Activated CD4-positive, alpha-beta T cell treated with anti-CD3 and anti-CD28 coated beads, Interleukin-2, amount 10 ng/mL, durations not matched to agents 24 days and 14 days (primary cell): ENCODE measurements at regions of chr19 and their contacts with region 1.

Region 1: DNA sequence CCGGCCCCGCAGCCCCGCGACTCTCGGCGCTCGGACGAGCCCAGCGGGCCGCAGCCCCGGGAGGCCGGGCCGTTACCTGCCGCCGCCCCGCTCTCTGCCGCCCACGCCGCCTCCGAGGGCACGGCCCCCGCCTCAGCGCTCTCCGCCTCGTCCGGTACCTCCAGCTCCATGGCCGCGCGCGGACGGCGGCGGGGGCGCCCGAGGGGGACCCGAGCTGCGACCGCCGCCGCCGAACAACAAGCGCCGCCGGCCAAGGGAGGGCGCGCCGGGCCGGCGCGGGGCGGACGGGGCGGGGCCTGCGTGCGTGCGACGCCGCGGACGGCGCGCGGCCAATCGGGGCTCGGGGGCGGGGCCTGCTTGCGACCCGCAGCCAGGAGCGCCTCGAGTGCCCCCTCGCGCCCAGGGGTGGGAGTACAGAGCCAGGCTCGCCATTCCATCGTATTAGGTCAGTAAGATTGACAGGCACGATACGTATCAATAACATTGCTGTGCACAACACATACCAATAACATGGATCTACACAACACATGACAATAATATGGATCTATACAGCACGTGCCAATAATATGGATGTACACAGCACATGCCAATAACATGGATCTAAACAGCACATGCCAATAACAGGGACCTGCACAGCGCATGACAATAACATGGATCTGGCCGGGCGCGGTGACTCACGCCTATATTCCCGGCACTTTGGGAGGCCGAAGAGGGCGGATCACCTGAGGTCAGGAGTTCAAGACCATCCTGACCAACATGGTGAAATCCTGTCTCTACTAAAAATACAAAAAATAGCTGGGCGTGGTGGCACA is at the start of gene PIP5K1C:
- DNase-seq: peak; percentile 98
- H3K4me3 Mint-ChIP-seq: peak within 1 kb of the TSS; percentile 91
- H3K27ac Mint-ChIP-seq: peak within 1 kb of the TSS; percentile 75
- H3K4me1 Mint-ChIP-seq: peaks cover 18% of the 10 kb centered on the region
- H3K27me3 Mint-ChIP-seq: peaks cover 2% of the 10 kb centered on the region
- total RNA-seq, gene PIP5K1C: 21.4 and 22.5 TPM in 2 replicates

Region 2: GRCh38 chr19:3665681-3666544 is 34.5 kb before region 1 on chr19:
- intact Hi-C with region 1: loop called (anchors 1 kb)
- DNase-seq: peak; percentile 94
- H3K4me3 Mint-ChIP-seq: no peak overlapping the region
- H3K27ac Mint-ChIP-seq: no peak overlapping the region
- H3K4me1 Mint-ChIP-seq: no peaks in the 10 kb centered on the region
- H3K27me3 Mint-ChIP-seq: no peaks in the 10 kb centered on the region

Region 3: DNA sequence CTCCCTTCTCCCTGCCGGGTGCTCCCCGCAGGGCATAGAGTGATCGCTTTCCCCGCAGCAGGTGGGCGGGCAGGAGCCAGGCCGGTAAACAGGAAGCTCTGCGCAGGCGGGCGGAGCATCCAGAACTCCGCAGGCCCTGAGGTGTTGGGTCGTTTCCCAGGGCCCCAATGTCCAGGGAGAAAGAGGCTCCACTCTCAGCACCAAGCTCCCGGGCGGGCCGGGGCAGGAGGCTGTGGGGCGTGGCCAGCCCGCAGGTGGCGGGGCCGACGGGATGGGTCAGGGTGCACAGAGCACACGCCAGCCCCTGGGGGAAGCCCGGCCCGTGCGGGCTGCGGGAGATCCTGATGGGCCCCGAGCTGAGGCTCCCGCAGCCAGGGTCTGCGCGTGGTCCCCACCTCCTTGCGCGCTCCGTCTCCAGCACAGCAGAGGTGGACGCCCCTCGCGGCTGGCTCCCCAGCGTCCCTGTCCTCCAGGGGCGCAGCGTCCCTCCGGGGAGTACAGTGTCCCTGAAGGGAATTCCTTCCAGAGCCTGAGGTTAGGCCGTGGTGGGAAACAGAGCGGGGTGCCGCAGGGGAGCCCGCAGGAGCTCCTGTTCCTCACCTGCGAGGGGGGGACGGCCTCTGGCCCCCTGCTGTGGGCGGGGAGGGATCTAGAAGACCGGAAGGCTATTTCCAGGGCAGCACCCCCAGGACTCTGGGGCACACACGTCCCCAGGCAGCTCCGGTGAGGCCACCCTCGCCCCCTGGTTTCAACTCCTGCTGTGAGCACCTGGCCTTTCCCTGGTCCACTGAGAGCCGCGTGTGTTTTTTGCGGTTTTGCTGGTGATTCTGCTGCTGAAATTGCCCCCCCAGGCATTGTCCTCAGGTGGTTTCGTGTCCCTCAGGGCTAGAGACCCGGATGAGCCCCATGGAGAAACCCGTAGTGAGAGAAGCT is 12.4 kb before region 1 on chr19:
- intact Hi-C with region 1: loop called (anchors 1 kb)
- DNase-seq: peak; percentile 81
- H3K4me3 Mint-ChIP-seq: peak overlapping the region; percentile 77
- H3K27ac Mint-ChIP-seq: no peak overlapping the region
- H3K4me1 Mint-ChIP-seq: peaks cover 38% of the 10 kb centered on the region
- H3K27me3 Mint-ChIP-seq: no peaks in the 10 kb centered on the region